ENCODE measurements at regions of chr17 and their contacts with region 1.

Region 1: GRCh38 chr17:63773381-63774140 is at the start of gene CCDC47:
- DNase-seq: peak; percentile 97 to 100 (median 99)

Region 2: DNA sequence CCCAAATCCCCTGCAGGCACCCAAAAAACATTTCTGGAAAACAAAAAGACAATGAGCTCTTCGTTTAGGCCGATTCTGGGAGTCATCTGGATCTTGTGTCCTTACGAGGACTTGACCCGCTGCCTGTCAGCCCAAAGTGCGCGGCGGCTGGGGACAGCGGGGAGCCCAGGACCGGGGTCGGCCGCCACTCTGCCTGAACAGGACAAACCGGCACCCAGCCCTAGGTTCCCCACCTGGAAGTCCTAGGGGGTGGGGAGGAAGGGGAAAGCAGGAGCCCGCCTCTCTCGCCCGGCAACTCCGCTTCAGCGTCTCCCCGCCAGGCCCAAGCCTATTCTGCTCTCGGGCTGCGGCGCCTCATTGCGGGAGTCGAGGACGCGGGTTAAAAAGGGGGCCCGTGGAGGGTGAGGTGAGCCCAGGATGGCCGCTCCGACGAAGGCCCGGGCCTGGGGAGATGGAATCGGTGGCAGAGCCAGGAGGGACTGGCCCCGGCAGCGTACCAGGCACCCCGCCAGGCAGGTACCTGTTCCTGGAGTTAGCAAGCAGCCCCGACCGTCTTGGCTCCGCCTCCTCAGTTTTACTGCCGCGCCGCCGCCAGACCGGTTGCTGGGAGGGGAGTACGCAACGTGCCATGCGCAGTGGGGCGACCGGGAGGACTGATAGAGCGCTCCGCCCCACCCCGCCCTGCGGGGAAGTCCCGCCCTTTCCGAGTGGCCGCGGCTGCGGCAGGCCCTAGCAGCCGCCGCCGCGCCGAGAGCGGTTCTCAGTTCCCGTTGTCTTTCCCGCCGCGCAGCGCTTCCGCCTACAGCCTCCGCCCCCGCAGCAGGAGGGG is 32.1 kb before region 1 on chr17 and contains the start of gene STRADA:
- intact Hi-C with region 1: loop called (anchors 2 kb)
- DNase-seq: peak; percentile 93 to 99 (median 98)

Region 3: DNA sequence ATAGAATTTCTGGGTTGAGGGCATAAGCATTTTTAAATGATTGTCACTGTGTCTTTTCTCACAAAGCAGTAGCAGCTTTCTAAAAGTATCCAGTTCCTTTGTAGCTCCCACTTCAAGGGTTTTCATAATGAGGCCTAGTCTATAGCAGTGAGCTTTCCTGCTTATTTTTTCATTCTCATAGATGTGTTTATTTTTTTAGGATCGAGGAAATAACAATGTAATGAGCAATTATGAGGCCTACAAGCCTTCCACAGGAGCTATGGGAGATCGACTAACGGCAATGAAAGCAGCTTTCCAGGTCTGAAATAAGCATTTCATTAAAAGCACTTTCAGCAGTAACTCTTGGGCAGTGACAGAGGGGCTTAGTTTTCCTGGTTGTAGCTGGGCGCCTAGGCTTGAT is 43.1 kb after region 1 on chr17:
- intact Hi-C with region 1: no loop called
- DNase-seq: no peak

Region 4: DNA sequence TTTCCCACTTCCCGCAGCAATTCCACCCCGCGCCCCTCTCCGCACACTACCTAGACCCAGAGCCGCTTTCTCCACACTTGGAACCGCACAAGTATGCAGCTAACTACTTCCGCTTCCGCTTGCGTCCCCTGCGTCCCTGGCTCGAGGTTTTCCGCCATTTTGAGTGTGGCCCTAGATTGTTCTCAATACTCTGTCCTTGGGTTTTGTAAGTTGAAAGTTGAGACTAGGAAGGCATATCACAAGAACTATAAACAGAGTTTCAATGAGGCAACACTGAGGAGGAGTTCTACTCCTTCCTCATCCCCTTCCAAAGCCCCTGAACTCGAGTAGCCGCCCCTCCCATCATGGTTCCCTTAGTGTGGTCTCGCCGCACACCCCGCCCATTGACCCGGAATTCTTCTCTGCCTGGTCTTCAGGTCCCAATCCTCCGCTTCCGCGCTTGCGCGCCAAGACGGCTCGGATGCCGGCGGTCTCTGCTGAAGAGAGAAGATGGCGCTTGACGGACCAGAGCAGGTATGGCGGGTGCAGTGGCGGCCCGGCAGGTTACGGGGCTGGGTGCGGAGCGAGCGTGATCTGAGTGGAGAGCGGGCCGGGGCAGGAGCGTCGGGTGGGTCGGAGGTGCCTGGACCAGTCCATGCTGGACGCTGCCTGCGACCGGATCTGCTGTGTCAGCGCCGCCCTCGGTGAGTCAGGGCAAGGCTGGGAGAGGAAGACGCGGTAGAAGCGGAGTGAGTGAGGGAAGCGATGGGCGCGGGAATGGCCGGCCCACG is 53.6 kb after region 1 on chr17 and contains the starts of genes FTSJ3 and PSMC5:
- intact Hi-C with region 1: loop called (anchors 5 kb)
- DNase-seq: peak; percentile 96 to 99 (median 98)

Region 5: GRCh38 chr17:63842540-63843386 is 69.2 kb after region 1 on chr17 and contains the start of gene SMARCD2:
- intact Hi-C with region 1: loop called (anchors 2 kb)
- DNase-seq: peak; percentile 94 to 100 (median 98)

Measured in head of caudate nucleus (tissue), 42 donors.